Cardiac septum (tissue), 1 donor: ENCODE measurements at regions of chr18 and their contacts with region 1.

Region 1: DNA sequence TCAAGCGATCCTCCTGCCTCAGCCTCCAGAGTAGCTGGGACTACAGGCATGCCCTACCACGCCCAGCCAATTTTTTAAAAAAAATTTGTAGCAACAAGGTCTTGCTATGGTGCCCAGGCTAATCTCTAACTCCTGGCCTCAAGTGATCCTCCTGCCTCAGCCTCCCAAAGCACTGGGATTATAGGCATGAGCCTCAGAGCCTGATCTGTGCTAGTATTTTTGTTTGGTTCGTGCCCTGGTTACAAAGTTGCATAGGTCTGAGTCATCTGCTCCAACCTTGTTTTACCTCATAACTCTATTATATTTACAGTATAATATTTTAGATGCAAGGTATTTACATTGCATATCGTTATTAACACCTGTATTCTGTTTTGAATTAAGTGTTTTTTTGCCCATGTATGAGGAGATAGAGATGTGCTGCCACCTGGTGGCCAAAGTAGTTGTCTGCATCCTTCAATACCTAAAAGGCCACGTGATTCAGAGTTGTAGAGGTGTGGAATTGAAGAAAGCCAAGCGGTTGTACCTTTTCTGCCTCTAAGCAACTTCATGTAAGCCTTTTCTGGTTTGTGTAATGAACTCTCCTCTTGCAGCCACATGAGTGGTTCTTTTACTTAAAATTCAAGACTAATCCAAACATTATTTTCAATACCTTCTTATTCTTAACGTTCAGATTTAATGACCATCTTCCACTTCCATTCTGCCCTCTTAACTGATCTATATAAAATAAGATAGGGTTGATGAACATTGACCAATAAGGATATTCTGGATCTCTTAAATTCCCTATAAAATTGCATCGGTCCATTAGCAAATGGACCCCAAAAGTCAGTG is 19.9 kb upstream of the CABYR start:
- DNase-seq: no peak

Region 2: GRCh38 chr18:23629444-23629946 is 489.5 kb before region 1 on chr18:
- intact Hi-C with region 1: loop called (anchors 10 kb)
- DNase-seq: no peak

Region 3: DNA sequence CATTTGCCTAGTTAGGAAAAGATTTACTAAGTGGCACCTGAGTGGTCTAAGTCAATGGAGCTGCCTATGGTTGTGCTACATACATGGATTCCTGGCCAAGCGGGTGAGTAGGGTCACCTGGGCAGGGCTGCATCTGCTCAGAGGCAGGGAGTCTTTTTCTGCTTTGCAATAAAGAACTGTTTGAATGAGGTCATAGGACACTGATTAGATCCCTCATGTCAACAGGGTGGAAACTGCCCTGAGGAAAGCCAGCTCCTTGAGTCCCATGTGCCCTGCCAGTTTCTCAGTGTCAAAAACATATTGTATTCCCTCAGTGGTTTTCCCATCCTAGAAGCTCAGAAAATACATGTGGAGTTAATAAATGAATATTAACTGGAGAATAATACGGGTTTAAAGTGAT is 425.1 kb before region 1 on chr18:
- intact Hi-C with region 1: no loop called
- DNase-seq: no peak

Region 4: DNA sequence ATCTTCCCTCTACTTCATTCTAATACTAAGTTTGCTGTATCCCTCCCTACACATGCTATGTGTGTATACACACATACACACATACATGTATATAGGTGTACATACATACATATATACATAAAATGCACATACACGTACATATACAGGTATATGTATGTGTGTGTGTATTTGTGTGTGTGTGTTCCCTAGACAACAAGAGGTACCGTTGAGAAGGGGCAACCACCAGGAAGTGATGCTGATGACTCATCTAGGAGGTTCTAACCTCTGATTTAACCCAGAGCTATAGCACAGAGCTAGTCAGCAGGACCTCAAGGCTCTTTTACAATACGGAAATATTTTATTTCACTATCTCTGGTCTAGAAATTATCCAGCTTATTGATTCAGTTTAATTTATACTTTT is 290.5 kb before region 1 on chr18:
- intact Hi-C with region 1: loop called (anchors 5 kb)
- DNase-seq: no peak

Region 5: GRCh38 chr18:23924813-23925212 is 194.2 kb before region 1 on chr18:
- intact Hi-C with region 1: loop called (anchors 10 kb)
- DNase-seq: no peak

Region 6: GRCh38 chr18:23943104-23943503 is 175.9 kb before region 1 on chr18:
- intact Hi-C with region 1: no loop called
- DNase-seq: no peak

Region 7: DNA sequence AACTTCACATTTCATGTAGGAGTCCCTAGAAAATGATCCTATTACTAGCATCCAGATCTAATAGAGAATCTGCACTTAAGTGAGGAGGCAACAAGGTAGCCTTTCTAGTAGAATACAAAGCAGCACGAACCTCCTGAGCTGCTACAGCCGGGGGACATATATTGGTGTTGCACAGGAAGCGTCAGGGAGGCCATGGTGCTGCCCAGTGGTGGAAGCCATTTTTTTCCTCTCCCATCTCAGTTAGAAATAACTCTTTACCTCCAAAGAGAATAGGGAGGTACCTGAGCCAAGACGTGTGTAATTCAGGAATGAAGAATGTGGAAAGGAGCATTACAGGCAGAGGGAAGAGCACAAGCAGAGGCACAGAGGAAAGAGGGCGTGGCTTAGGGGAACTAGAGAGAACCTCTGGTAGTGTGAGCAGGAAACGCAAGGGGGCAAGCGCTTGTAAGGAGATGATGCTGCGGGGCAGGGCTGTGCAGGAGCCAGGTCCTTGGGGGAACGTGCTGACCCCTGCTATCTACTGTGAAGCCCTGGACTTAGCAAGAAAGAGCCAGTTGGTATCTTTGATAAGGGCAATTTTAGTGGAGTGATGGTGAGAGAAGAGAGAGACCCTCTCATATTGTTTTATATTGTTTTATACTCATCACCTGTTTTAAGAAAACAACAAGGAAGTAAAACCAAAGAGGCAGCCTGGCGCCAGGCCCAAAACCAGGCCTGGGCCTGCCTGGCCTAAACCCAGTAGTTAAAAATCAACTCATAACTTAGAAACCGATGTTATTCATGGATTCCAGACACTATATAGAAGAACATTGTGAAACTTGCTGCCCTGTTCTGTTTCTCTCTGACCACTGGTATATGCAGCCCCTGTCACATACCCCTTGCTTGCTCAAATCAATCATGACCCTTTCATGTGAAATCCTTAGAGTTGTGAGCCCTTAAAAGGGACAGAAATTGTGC is 154.4 kb before region 1 on chr18:
- intact Hi-C with region 1: loop called (anchors 5 kb)
- DNase-seq: no peak

Region 8: DNA sequence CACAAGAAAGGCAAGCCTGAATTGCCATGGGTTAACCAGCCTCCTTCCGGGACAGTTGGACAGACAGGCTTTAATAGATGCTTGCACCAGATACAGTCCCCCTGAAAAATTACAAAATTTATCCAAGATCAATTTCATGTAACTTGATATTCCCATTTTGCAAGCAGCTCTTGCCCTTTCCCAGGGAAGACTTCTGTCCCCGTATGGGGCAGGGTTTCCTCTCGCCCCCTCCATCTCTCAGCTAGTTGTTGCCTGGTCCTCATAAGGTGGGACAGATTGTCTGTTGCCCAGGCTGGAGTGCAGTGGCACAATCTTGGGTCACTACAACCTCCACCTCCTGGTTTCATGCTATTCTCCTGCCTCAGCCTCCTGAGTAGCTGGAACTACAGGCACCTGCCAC is 43.2 kb before region 1 on chr18:
- intact Hi-C with region 1: no loop called
- DNase-seq: no peak

Region 9: DNA sequence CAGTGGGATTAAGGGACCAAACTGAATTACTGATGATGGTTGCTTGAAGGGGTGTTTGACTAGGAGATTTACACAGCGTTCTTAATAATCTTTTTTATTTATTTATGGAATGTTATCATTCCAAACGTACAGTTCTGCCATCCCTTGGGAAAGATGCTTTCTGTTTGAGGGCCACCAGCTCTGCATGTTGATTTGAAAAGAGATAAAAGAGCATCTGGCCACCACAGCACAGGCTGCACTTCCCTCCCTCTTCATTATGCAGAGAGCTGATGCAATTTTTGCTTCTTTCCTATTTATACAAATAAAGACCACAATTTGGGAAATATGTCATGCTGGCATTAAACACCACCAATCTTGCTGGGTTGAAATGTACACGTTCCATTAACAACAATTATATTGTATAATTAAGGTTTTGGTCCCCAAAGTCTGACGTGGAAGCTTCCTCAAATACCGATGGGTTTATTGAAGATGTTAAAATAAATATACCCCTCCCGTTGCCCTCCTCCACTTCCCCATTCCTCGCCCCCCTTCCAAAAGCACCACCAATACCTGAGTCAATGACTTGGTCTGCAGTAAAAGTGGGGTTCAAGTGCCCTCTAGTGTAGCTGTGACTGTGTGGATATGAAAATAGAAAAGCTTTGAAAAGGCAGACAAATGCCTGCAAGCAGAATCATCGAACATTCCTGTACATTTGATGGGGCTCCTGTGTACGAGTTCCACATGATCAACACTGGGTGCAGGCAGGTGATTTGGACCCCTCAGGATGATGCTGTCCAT is 553.4 kb after region 1 on chr18:
- intact Hi-C with region 1: no loop called
- DNase-seq: no peak